GM12878 (cell line): ENCODE measurements at regions of chr5 and their contacts with region 1.

Region 1: GRCh38 chr5:53481887-53482716 is 1.7 kb downstream of the FST start:
- DNase-seq: no peak
- ATAC-seq: peak; percentile 82
- H3K4me3 ChIP-seq: peak overlapping the region; percentile 71
- H3K27ac ChIP-seq: no peak overlapping the region
- H3K4me1 ChIP-seq: peaks cover 8% of the 10 kb centered on the region
- H3K27me3 ChIP-seq: peaks cover 4 to 19% of the 10 kb centered on the region in 2 experiments
- CTCF ChIP-seq: peak in 1 of 3 experiments; percentile 15; a peak in 2 of 6 replicates
- EP300 ChIP-seq: no peak
- POLR2A ChIP-seq: no peak
- RAD21 ChIP-seq: no peak

Region 2: DNA sequence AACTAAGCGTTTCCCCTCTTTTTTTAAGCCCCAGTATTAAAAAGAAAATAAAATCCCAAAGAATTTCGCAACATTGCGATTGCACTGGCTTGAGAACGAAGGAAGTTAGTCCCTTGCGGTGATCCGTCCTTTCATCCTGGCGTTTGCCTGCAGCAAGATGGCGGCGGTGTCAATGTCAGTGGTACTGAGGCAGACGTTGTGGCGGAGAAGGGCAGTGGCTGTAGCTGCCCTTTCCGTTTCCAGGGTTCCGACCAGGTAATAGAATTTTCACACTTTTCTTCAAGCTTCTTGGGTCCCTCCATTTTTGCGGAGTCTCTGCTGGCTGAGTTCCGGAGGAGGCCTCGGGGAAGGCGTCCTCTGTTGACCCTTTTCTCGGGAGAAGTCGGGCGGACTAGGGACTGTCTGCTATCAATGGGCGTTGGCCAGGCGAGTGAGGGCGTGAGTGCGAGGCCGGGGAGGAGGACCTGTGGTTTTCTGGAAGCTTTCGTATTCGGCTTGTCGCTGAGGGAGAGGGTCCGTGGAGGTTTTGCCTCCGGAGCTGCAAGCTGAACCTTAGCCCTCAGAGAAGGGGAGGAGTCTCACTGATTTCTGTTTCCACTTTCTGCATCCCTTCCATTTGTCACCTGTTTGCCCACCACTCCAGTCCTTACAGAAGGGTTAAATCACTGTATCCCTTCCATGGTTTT is 78.5 kb after region 1 on chr5 and contains the start of gene NDUFS4:
- CTCF ChIA-PET with region 1: no interaction called
- POLR2A ChIA-PET with region 1: no interaction called
- RAD21 ChIA-PET with region 1: no interaction called
- SMC1A ChIA-PET with region 1: no interaction called
- in situ Hi-C with region 1: no loop called
- intact Hi-C with region 1: loop called (anchors 5 kb)
- DNase-seq: peak; percentile 45
- ATAC-seq: peak; percentile 91
- H3K4me3 ChIP-seq: peak within 1 kb of the TSS; percentile 93
- H3K27ac ChIP-seq: peak within 1 kb of the TSS; percentile 87
- H3K4me1 ChIP-seq: no peaks in the 10 kb centered on the region
- H3K27me3 ChIP-seq: no peaks in the 10 kb centered on the region
- CTCF ChIP-seq: no peak
- EP300 ChIP-seq: no peak
- POLR2A ChIP-seq: peak; percentile 93
- RAD21 ChIP-seq: no peak
- polyA plus RNA-seq, gene NDUFS4: 303 to 366 TPM

Region 3: GRCh38 chr5:53991942-53992341 is 509.8 kb after region 1 on chr5:
- CTCF ChIA-PET with region 1: interaction called, 7 read pairs
- POLR2A ChIA-PET with region 1: no interaction called
- RAD21 ChIA-PET with region 1: no interaction called
- SMC1A ChIA-PET with region 1: no interaction called
- in situ Hi-C with region 1: no loop called
- intact Hi-C with region 1: loop called (anchors 5 kb)
- DNase-seq: peak; percentile 3
- ATAC-seq: peak; percentile 41; the same call in 1 of the 3 replicates
- H3K4me3 ChIP-seq: no peak overlapping the region
- H3K27ac ChIP-seq: no peak overlapping the region
- H3K4me1 ChIP-seq: no peaks in the 10 kb centered on the region
- H3K27me3 ChIP-seq: no peaks in the 10 kb centered on the region
- CTCF ChIP-seq: peak; percentile 25 to 47 (median 36); a peak in 5 of 6 replicates
- EP300 ChIP-seq: no peak
- POLR2A ChIP-seq: no peak
- RAD21 ChIP-seq: peak; percentile 39

Region 4: DNA sequence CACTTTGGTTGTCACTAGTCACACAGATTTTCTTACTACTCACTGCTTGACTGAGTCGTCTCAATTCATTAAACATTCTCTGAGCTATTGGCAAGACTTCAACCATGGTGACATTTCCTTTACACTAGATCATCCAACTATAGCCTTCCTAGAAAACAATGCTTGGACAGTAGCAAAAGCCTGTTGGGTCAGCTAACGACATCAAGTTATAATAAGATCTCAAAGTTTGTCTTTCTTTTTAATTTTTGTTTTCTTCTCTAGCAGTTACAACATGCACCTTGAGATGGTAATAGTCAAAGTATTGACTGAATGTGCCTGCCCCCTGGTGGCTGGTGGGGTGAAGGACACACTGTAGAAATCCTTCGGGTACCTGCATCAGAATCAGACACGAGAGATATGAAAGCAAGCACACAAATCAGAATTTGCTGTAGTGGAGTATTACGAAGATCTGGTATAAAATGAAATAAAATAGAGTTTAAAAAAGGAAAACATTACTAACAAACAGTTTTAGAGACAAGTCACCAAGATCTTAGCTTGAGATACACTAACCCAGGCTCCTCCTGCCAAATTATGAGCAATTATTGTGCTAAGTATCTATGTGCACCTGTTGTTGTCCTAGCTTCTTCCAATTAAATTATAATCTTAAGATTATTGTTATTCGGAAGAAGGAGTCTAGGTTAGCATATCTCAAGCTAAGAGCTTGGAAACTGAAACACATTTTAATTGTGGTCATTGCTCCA is 747.1 kb after region 1 on chr5:
- CTCF ChIA-PET with region 1: interaction called, 38 read pairs
- POLR2A ChIA-PET with region 1: no interaction called
- RAD21 ChIA-PET with region 1: interaction called, 18 read pairs
- SMC1A ChIA-PET with region 1: interaction called, 6 read pairs
- in situ Hi-C with region 1: loop called (anchors 5 kb)
- intact Hi-C with region 1: no loop called
- DNase-seq: no peak
- ATAC-seq: peak; percentile 95
- H3K4me3 ChIP-seq: no peak overlapping the region
- H3K27ac ChIP-seq: no peak overlapping the region
- H3K4me1 ChIP-seq: no peaks in the 10 kb centered on the region
- H3K27me3 ChIP-seq: no peaks in the 10 kb centered on the region
- CTCF ChIP-seq: peak; percentile 86 to 94 (median 90)
- EP300 ChIP-seq: no peak
- POLR2A ChIP-seq: no peak
- RAD21 ChIP-seq: peak; percentile 89

Region 5: GRCh38 chr5:54234304-54234933 is 752.3 kb after region 1 on chr5:
- CTCF ChIA-PET with region 1: interaction called, 38 read pairs
- POLR2A ChIA-PET with region 1: no interaction called
- RAD21 ChIA-PET with region 1: interaction called, 18 read pairs
- SMC1A ChIA-PET with region 1: interaction called, 6 read pairs
- in situ Hi-C with region 1: loop called (anchors 5 kb)
- intact Hi-C with region 1: no loop called
- DNase-seq: no peak
- ATAC-seq: peak; percentile 72
- H3K4me3 ChIP-seq: no peak overlapping the region
- H3K27ac ChIP-seq: no peak overlapping the region
- H3K4me1 ChIP-seq: no peaks in the 10 kb centered on the region
- H3K27me3 ChIP-seq: no peaks in the 10 kb centered on the region
- CTCF ChIP-seq: peak; percentile 26 to 50 (median 50); a peak in 5 of 6 replicates
- EP300 ChIP-seq: no peak
- POLR2A ChIP-seq: no peak
- RAD21 ChIP-seq: peak; percentile 66